ENCODE measurements at regions of chr12 and their contacts with region 1.

Region 1: DNA sequence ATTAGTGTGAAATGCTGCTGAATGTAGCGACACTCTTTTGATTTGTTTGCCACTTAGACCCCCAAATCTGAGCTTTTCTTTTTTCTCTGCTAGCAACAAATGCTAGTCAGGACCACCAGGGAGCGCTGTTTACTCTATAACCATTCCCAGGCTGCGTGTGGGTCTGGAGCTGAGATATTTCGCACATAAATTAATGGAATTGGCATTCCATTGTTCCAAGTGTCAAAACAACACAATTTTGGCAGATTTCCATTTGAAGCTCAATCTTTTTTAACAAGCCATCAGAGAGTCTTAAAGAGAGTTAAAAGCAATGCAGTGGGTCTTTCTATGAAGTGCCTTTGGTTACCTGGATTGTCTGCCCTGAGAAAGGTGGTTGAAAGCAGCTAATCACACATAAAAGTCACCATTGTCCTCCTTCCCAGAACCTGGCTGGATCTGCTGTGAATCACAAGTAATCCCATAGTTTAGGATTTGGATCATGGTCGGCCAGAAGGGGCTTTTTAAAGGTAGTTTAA is 7.4 kb upstream of the TMEM132C start:
- DNase-seq: no peak
- H3K4me3 ChIP-seq: no peak overlapping the region
- H3K27ac ChIP-seq: no peak overlapping the region
- H3K4me1 ChIP-seq: no peaks in the 10 kb centered on the region
- H3K27me3 ChIP-seq: no peaks in the 10 kb centered on the region
- CTCF ChIP-seq: peak in 3 of 4 experiments; percentile 49 to 62 (median 55)
- POLR2A ChIP-seq: no peak

Region 2: DNA sequence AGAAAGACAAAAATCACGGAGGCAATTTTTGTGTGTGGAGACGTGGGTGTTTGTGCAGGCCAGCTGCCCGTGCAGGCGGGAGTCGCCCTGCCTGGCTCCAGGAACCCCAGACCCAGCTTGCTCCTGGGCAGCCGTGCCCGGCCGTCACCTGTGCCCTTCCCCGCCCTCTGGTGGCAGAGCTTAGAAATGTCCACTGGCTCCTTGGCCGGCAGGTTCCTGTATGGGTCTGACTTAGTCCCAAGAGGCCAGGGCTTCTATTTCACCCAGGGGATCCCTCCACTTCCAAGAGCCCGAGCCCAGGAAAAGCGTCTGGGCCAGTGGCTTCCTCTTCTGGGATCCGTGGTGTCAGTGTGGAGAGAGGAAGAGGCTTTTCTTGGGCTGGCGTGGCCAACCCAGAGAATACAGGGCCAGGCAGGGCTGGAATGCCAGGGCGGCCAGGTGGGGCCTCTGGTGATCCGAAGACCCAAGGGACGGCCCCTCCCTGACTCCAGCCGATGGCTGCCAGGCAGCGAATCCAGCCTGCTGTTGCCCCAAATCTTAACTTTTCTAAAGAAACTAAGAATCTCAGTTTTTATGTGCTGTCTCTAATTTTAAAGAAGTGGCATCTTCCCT is 128.3 kb after region 1 on chr12:
- intact Hi-C with region 1: loop called (anchors 10 kb)
- DNase-seq: no peak
- H3K4me3 ChIP-seq: no peak overlapping the region
- H3K27ac ChIP-seq: no peak overlapping the region
- H3K4me1 ChIP-seq: no peaks in the 10 kb centered on the region
- H3K27me3 ChIP-seq: no peaks in the 10 kb centered on the region
- CTCF ChIP-seq: peak in 3 of 4 experiments; percentile 24 to 38 (median 37)
- POLR2A ChIP-seq: no peak